ENCODE measurements at regions of chr4 and their contacts with region 1.

Region 1: GRCh38 chr4:75817901-75818300 is 84.4 kb downstream of the PPEF2 start:
- DNase-seq: no peak
- ATAC-seq: peak in 2 of 4 donors; percentile 9 to 12
- H3K4me3 ChIP-seq: no peak overlapping the region
- H3K27ac ChIP-seq: no peak overlapping the region
- H3K4me1 ChIP-seq: peaks cover 5% of the 10 kb centered on the region
- H3K27me3 ChIP-seq: no peaks in the 10 kb centered on the region
- CTCF ChIP-seq: no peak

Region 2: DNA sequence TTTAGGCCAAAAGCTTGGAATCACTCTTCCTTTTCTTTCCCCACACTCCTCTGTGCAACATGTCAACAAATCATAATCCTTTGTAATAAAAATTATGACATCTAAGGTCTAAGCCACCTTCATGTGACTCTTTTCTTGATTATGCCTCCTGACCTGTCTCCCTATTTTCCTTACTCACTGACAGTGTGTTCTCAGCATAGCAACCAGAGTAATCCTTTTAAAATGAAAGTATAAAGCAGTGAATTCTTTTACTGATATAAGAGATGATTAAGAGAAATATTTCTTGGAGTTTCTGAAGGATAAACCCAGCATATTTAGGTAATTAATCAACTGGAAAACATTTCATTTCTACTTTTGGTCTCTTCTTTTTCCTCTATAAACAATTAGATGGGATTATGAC is 48.9 kb before region 1 on chr4:
- intact Hi-C with region 1: loop called in 1 of 2 experiments (anchors 10 kb)
- DNase-seq: no peak
- ATAC-seq: peak in 1 of 4 donors; percentile 51
- H3K4me3 ChIP-seq: no peak overlapping the region
- H3K27ac ChIP-seq: no peak overlapping the region
- H3K4me1 ChIP-seq: no peaks in the 10 kb centered on the region
- H3K27me3 ChIP-seq: no peaks in the 10 kb centered on the region
- CTCF ChIP-seq: no peak

Region 3: DNA sequence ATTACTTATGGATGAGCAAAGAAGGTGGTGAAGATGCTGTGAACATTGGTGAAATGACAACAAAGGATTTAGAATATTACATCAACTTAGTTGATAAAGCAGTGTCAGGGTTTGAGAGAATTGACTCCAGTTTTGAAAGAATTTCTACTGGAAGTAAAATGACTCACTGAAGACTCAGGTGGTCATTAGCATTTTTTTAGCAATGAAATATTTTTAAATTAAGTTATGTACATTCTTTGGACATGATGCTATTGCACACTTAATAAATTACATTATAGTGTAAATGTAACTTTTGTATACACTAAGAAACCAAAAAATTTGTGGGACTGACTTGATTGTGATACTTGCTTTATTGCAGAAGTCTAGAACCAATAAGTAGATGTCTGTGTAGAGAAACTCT is 36.6 kb before region 1 on chr4:
- intact Hi-C with region 1: loop called in 1 of 2 experiments (anchors 5 kb)
- DNase-seq: no peak
- ATAC-seq: no peak
- H3K4me3 ChIP-seq: no peak overlapping the region
- H3K27ac ChIP-seq: no peak overlapping the region
- H3K4me1 ChIP-seq: no peaks in the 10 kb centered on the region
- H3K27me3 ChIP-seq: no peaks in the 10 kb centered on the region
- CTCF ChIP-seq: no peak